Colonic mucosa (tissue), 4 donors: ENCODE measurements at regions of chr7 and their contacts with region 1.

Region 1: GRCh38 chr7:35424869-35425495 is 171.1 kb upstream of the TBX20 start:
- DNase-seq: peak; percentile 34
- H3K4me3 ChIP-seq: no peak overlapping the region
- H3K27ac ChIP-seq: no peak overlapping the region
- H3K4me1 ChIP-seq: no peaks in the 10 kb centered on the region
- H3K27me3 ChIP-seq: no peaks in the 10 kb centered on the region
- CTCF ChIP-seq: peak; percentile 70

Region 2: GRCh38 chr7:35519971-35520809 is 95.2 kb after region 1 on chr7:
- intact Hi-C with region 1: loop called (anchors 5 kb)
- DNase-seq: peak; percentile 63
- H3K4me3 ChIP-seq: no peak overlapping the region
- H3K27ac ChIP-seq: no peak overlapping the region
- H3K4me1 ChIP-seq: no peaks in the 10 kb centered on the region
- H3K27me3 ChIP-seq: no peaks in the 10 kb centered on the region
- CTCF ChIP-seq: peak; percentile 75

Region 3: DNA sequence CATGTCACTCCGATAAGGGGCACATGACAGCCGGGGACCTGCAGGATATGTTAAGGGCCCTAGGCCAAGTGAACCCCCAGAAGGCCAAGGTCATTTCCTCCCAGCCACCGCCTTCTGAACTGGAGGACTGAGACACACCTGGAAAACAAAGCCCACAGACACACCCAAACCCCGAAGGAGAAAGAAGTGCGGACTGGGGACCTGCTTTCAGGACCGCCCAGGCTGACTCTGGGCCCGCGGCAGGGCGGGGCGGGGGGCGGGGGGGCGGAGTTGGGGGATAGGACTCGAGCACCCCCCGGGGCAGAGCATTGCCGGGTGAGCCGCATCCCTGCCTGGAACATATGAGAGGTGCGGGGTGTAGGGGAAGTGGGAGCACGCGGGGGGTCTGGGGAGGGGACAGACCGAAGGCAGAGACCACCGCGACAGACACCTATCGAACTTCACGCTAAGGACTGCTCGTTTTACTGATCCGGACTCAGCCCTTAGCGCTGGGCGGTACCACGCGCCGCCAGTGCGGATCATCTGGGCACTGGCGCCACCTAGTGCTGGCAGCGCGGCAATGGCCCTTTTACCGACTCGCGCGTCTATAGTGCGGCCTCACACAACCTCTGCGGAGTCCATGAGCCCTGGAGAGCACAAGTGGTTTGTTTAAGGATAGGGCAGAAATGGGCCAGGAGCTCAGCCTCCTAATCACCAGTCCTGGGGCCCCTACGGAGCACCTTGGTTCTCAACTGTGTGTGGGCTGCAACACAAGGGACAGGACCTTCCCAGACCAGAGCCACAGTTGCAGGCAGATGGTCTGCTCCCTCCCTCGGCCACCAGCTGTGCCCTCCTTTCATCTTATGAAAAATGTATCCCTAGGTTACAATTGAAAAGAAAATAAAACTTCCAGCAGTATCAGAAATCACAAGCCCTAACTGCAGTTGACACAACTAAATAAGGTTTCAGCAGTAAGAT is 112.4 kb after region 1 on chr7:
- intact Hi-C with region 1: loop called (anchors 5 kb)
- DNase-seq: peak; percentile 77
- H3K4me3 ChIP-seq: peak overlapping the region; percentile 41
- H3K27ac ChIP-seq: no peak overlapping the region
- H3K4me1 ChIP-seq: no peaks in the 10 kb centered on the region
- H3K27me3 ChIP-seq: no peaks in the 10 kb centered on the region
- CTCF ChIP-seq: peak; percentile 90

Region 4: DNA sequence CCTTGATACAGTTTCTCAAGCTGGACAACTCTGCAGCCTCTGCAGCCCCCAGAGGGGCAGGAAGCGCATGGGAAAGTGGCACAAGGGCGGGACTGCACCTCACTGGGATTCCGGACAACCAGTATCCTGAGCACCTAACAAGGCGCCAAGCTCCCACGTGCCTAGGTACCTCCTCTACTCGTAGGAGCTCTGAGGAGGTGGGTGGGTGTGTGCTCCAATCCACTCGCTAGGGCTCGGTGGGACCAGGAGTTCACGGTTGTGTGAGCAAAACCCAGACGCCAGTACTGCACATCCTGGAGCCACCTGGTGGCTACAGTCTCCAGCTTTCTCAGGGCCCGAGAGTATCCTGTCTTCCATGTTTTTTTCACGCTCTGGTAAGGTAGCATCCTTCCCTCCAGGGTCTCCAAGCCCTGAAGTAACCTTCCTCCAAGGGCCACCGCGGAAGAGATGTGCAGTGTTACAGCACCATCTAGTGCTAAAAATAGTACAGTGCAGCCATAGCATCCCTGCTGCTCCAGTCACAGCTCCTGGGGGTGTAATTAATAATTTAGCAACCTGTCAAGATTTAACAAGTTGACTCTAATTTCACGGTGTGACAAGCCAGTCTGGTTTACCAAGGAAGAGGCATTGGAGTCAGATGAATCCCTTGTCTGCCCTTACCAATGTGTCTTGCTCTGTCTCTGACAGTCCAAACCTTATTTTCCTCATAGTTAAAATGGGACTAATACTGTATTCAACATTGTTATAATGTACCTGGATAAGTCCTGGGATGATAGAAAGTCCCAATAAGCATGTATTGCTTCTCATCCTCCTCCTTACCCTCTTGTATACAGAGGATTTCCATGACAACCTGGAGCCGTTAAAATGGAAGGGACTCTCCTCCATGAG is 199.6 kb after region 1 on chr7:
- intact Hi-C with region 1: loop called (anchors 5 kb)
- DNase-seq: no peak
- H3K4me3 ChIP-seq: no peak overlapping the region
- H3K27ac ChIP-seq: no peak overlapping the region
- H3K4me1 ChIP-seq: no peaks in the 10 kb centered on the region
- H3K27me3 ChIP-seq: no peaks in the 10 kb centered on the region
- CTCF ChIP-seq: peak; percentile 75